K562 (cell line): ENCODE measurements at regions of chr1 and their contacts with region 1.

Region 1: GRCh38 chr1:88777604-88778149 is 93.6 kb downstream of the PKN2 start:
- DNase-seq: peak in 2 of 4 experiments; percentile 14 to 18
- ATAC-seq: peak; percentile 54
- H3K4me3 ChIP-seq: no peak overlapping the region
- H3K27ac ChIP-seq: no peak overlapping the region
- H3K4me1 ChIP-seq: no peaks in the 10 kb centered on the region
- H3K27me3 ChIP-seq: no peaks in the 10 kb centered on the region
- CTCF ChIP-seq: no peak
- EP300 ChIP-seq: no peak
- POLR2A ChIP-seq: no peak
- RAD21 ChIP-seq: no peak

Region 2: DNA sequence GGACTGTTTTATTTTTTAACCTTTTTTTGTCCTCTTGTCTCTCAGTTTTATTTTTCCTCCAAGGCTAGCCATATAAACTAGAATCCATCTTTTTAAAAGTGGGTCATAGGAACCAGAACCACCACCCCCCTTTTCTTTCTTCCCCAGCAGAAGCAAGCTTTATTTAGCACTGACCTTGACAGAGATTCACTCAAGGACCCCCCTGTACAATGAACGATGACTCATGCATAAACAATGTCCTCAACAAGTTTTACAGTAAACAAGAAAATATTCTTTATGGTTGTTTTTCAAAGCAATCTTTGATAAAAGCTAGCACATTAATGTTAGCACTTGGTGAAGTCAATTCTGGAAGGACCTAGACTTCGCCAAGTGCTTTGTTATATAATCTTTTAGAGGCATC is 79.5 kb before region 1 on chr1:
- CTCF ChIA-PET with region 1: no interaction called
- POLR2A ChIA-PET with region 1: no interaction called
- in situ Hi-C with region 1: no loop called
- intact Hi-C with region 1: loop called (anchors 5 kb)
- DNase-seq: peak in 3 of 4 experiments; percentile 10 to 14 (median 10)
- ATAC-seq: peak; percentile 16; the same call in 1 of the 3 replicates
- H3K4me3 ChIP-seq: no peak overlapping the region
- H3K27ac ChIP-seq: peak overlapping the region; percentile 28; the same call in 1 of the 3 replicates
- H3K4me1 ChIP-seq: peaks cover 0 to 3% of the 10 kb centered on the region in 2 experiments; a peak in 1 of 5 replicates
- H3K27me3 ChIP-seq: no peaks in the 10 kb centered on the region
- CTCF ChIP-seq: no peak
- EP300 ChIP-seq: no peak
- POLR2A ChIP-seq: no peak
- RAD21 ChIP-seq: no peak

Region 3: GRCh38 chr1:88708021-88708420 is 69.7 kb before region 1 on chr1:
- CTCF ChIA-PET with region 1: no interaction called
- POLR2A ChIA-PET with region 1: interaction called, 3 read pairs
- in situ Hi-C with region 1: loop called (anchors 5 kb)
- intact Hi-C with region 1: no loop called
- DNase-seq: no peak
- ATAC-seq: no peak
- H3K4me3 ChIP-seq: no peak overlapping the region
- H3K27ac ChIP-seq: no peak overlapping the region
- H3K4me1 ChIP-seq: no peaks in the 10 kb centered on the region
- H3K27me3 ChIP-seq: no peaks in the 10 kb centered on the region
- CTCF ChIP-seq: no peak
- EP300 ChIP-seq: no peak
- POLR2A ChIP-seq: no peak
- RAD21 ChIP-seq: no peak